ENCODE measurements at regions of chr13 and their contacts with region 1.

Region 1: DNA sequence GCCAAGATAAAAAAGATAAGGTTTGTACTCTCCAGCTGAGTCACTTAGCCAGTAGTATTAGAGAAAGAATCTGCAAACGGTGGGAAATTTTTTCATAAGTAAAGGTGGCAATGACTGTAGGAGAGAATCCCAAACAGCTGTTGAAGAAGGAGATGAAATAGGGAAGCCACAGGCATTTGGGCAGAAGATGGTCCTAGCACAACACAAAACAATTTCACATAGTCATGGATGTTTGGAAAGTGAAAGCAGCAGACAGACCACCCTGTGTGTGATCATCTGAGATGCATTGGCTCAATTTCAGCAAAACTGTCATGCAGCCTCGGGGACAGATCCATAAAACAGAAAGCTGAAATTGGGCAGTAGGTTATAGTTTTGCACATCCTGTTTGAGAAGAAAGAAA is 2832.4 kb downstream of the PCDH9 start:
- DNase-seq: peak; percentile 18
- ATAC-seq: no peak; the same call in 1 of the 2 replicates
- H3K4me3 ChIP-seq: peak overlapping the region; percentile 7; the same call in 1 of the 2 replicates
- H3K27ac ChIP-seq: peak overlapping the region; percentile 58; the same call in 1 of the 2 replicates
- H3K4me1 ChIP-seq: peaks cover 18% of the 10 kb centered on the region; the same call in 1 of the 2 replicates
- H3K27me3 ChIP-seq: no peaks in the 10 kb centered on the region
- CTCF ChIP-seq: no peak

Region 2: GRCh38 chr13:64314331-64314730 is 83.4 kb before region 1 on chr13:
- CTCF ChIA-PET with region 1: no interaction called
- POLR2A ChIA-PET with region 1: no interaction called
- intact Hi-C with region 1: loop called (anchors 5 kb)
- DNase-seq: peak; percentile 74
- ATAC-seq: peak; percentile 77
- H3K4me3 ChIP-seq: no peak overlapping the region
- H3K27ac ChIP-seq: peak overlapping the region; percentile 75
- H3K4me1 ChIP-seq: peaks cover 29% of the 10 kb centered on the region
- H3K27me3 ChIP-seq: no peaks in the 10 kb centered on the region
- CTCF ChIP-seq: no peak